Spleen (tissue), 13 donors: ENCODE measurements at regions of chr4 and their contacts with region 1.

Region 1: DNA sequence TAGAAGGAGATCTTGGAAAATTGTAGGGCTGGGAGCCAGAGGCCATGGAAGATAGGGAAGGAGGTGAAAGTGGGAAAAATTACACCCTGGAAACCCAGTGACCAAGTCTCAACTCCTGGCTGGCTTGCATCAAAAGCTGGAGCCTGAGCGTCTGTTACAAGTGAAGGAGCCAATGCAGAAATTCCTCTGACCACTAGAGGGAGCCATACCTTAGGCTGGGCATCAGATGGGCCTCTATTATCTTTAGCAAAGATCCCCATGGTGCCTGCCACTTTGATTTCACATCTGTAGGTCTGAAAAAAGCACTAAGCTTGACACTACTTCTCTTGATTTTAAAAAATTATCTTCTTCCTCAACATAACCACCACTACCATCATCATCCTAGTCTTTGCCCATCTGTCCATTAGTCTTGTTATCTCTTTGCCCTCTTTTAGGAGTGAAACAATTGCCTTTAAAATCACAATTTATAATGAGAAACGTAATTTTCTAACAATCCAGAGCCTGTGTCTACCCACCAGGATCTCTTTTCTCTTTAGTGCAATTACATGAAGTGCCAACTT is 62.9 kb downstream of the ANAPC4 start:
- DNase-seq: no peak
- H3K4me3 ChIP-seq: no peak overlapping the region
- H3K27ac ChIP-seq: peak overlapping the region in 2 of 8 donors; percentile 40 to 53
- H3K4me1 ChIP-seq: peaks cover 0 to 12% (median 6%) of the 10 kb centered on the region in 6 donors
- H3K27me3 ChIP-seq: no peaks in the 10 kb centered on the region
- CTCF ChIP-seq: peak; percentile 37 to 89 (median 72)
- POLR2A ChIP-seq: no peak

Region 2: GRCh38 chr4:25500626-25501316 is 60.8 kb after region 1 on chr4:
- intact Hi-C with region 1: no loop called
- DNase-seq: no peak
- H3K4me3 ChIP-seq: no peak overlapping the region
- H3K27ac ChIP-seq: no peak overlapping the region
- H3K4me1 ChIP-seq: no peaks in the 10 kb centered on the region
- H3K27me3 ChIP-seq: no peaks in the 10 kb centered on the region
- CTCF ChIP-seq: no peak
- POLR2A ChIP-seq: no peak

Region 3: DNA sequence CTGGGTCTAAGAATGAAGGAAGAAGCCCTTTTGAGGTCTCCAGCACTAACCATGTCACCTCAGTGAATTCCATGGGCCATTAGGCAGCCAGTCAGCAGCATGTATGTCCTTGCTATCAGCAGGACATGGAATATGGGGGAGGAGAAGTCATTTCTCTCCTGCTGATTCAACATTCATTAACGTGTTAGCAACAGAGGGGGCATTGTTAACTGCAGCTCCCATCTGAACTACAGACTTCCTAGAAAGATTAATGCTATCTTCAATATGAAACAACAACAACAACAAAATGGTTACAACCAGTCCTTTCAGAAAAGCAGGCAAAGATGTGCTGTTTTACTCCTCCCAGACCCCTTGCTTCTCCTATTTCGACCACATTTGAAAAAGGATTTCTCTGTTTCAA is 95.3 kb after region 1 on chr4:
- intact Hi-C with region 1: no loop called
- DNase-seq: no peak
- H3K4me3 ChIP-seq: no peak overlapping the region
- H3K27ac ChIP-seq: no peak overlapping the region
- H3K4me1 ChIP-seq: peaks cover 0 to 7% (median 0%) of the 10 kb centered on the region in 6 donors
- H3K27me3 ChIP-seq: no peaks in the 10 kb centered on the region
- CTCF ChIP-seq: no peak
- POLR2A ChIP-seq: no peak

Region 4: GRCh38 chr4:25767877-25768725 is 328.1 kb after region 1 on chr4:
- intact Hi-C with region 1: loop called (anchors 5 kb)
- DNase-seq: no peak
- H3K4me3 ChIP-seq: no peak overlapping the region
- H3K27ac ChIP-seq: no peak overlapping the region
- H3K4me1 ChIP-seq: no peaks in the 10 kb centered on the region
- H3K27me3 ChIP-seq: no peaks in the 10 kb centered on the region
- CTCF ChIP-seq: peak in 10 of 11 experiments; percentile 16 to 70 (median 58)
- POLR2A ChIP-seq: no peak